H1 (cell line): ENCODE measurements at regions of chr3 and their contacts with region 1.

Region 1: GRCh38 chr3:122415720-122416654 is at the start of gene WDR5B:
- DNase-seq: peak; percentile 97 to 99
- H3K4me3 ChIP-seq: peak within 1 kb of the TSS; percentile 83 to 100 (median 88)
- H3K27ac ChIP-seq: peak within 1 kb of the TSS; percentile 92
- H3K4me1 ChIP-seq: peaks cover 0 to 7% (median 3%) of the 10 kb centered on the region in 4 experiments; a peak in 1 of 7 replicates
- H3K27me3 ChIP-seq: no peaks in the 10 kb centered on the region
- CTCF ChIP-seq: no peak
- EP300 ChIP-seq: no peak
- POLR2A ChIP-seq: peak; percentile 86 to 97
- RAD21 ChIP-seq: peak in 1 of 2 experiments; percentile 13; a peak in 1 of 4 replicates
- total RNA-seq, gene WDR5B: 2.7 and 3.5 TPM in 2 replicates

Region 2: DNA sequence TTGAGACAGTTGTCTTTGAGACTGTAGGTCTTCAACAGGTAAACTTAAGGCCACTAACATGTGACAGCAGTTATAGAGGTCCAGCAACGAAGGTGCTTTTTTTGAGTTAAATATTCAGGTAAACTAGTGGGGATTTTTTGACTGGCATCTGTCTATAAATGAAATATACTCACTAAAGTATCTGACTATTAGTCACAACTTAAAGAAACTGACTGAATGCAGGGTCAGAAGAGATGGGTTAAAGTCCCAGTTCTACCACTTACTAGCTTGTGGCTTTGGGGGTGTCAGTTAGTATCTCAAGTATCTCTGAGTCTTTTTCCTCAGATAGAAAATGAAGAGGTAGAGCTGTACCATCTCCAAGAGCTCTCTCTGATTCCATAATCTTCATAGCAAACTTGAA is 50.9 kb before region 1 on chr3:
- CTCF ChIA-PET with region 1: no interaction called
- POLR2A ChIA-PET with region 1: no interaction called
- DNase-seq: no peak
- H3K4me3 ChIP-seq: no peak overlapping the region
- H3K27ac ChIP-seq: no peak overlapping the region
- H3K4me1 ChIP-seq: no peaks in the 10 kb centered on the region
- H3K27me3 ChIP-seq: no peaks in the 10 kb centered on the region
- CTCF ChIP-seq: no peak
- EP300 ChIP-seq: no peak
- POLR2A ChIP-seq: no peak
- RAD21 ChIP-seq: no peak

Region 3: DNA sequence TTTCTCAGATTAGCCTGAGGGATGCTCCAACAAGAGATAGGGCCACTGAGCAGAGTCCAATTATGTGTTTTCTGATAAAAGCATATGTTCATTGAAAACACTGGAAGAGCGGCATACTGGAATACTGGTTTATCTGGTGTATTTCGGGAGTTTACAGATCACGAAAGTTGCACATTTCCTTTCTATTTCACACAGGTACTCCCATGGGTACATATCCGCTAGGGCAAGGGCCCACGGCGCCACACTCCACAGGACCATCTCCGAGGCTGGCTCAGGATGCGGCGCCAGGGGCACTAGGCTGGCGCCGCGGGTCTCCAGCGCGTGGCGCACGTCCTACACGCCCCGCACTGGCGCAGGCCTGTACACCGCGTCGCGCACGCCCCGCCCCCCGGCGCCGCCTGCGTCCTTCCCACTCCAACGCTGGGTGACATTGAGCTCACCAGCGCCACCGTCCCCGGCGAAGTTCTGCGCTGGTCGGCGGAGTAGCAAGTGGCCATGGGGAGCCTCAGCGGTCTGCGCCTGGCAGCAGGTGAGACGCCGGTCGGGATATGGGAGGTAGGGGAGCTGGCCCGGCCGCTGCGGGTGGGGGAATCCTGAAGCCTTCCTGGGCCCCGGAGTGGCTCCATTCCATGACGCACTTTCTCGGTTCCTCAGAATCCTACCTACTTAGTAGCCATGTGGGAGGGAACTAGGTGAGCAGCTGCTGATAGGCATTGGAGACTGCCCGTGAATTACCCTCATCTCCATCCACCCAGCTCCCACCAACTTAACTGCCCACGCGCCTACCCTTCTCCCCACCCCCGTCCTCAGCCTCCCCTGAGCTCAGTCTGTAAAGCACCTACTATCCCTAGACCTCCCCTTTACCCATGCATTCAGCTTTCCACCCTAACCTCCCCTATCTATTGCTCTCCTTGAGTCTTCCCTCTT is 32.0 kb before region 1 on chr3 and contains the start of gene FAM162A:
- CTCF ChIA-PET with region 1: interaction called, 17 read pairs
- POLR2A ChIA-PET with region 1: interaction called, 29 read pairs
- DNase-seq: peak; percentile 84 to 92
- H3K4me3 ChIP-seq: peak within 1 kb of the TSS; percentile 78 to 96 (median 94)
- H3K27ac ChIP-seq: peak within 1 kb of the TSS; percentile 80
- H3K4me1 ChIP-seq: peaks cover 0 to 6% (median 3%) of the 10 kb centered on the region in 4 experiments; a peak in 4 of 7 replicates
- H3K27me3 ChIP-seq: no peaks in the 10 kb centered on the region
- CTCF ChIP-seq: peak; percentile 52 to 70 (median 53)
- EP300 ChIP-seq: no peak
- POLR2A ChIP-seq: peak in 1 of 2 experiments; percentile 79; a peak in 1 of 3 replicates
- RAD21 ChIP-seq: peak; percentile 21 to 23; a peak in 2 of 4 replicates
- total RNA-seq, gene FAM162A: 54.1 and 59.7 TPM in 2 replicates

Region 4: DNA sequence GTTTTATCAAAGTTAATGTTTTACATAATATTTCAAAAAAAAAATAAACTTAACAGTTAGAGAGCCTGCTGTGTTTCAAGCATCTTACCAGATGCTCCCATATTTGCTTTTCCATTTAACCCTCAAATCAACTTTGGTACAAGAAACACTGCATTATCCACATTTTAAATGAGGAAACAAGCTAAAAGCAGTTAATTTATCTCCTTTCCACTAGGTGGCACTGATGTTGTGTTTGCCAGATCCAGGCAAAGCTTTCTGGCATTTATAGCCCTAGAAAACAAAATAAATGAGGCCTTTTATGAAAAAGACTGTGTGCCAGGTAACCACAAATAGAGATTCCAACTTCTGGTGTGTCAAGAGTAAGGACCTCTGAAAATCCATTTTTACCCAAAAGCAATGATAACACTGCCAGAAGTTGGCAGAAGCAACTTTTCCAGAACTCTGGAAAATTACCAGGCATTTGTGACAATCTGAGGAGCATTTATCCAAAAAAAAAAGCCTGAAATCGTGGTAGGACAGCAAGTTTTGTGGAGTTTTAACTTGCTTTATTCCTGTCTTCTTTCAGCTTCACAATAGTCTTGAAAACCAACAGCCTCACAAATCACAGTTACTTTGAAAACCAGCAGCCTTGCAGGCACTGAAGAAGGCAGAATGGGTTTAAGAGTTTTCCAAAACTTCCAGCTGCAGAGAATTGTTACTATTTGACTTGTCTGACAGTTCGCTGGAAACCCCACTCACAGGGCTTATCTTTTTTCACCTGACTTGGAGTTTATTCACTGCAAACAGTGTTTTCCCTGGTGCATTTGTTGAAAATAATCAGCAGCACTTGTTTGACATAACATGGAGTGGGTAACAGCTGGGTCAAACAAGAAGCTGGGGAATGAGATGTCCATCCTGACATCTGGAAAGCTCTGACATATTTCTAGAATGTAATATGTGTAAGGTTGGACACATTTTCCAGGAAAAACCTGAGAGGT is 22.8 kb before region 1 on chr3:
- CTCF ChIA-PET with region 1: interaction called, 16 read pairs
- POLR2A ChIA-PET with region 1: interaction called, 6 read pairs
- DNase-seq: no peak
- H3K4me3 ChIP-seq: no peak overlapping the region
- H3K27ac ChIP-seq: no peak overlapping the region
- H3K4me1 ChIP-seq: no peaks in the 10 kb centered on the region
- H3K27me3 ChIP-seq: no peaks in the 10 kb centered on the region
- CTCF ChIP-seq: peak in 2 of 3 experiments; percentile 54 to 64; a peak in 2 of 4 replicates
- EP300 ChIP-seq: no peak
- POLR2A ChIP-seq: no peak
- RAD21 ChIP-seq: peak; percentile 73 to 78

Region 5: GRCh38 chr3:122427857-122428471 is 12.0 kb after region 1 on chr3:
- CTCF ChIA-PET with region 1: no interaction called
- POLR2A ChIA-PET with region 1: interaction called, 10 read pairs
- DNase-seq: no peak
- H3K4me3 ChIP-seq: no peak overlapping the region
- H3K27ac ChIP-seq: no peak overlapping the region
- H3K4me1 ChIP-seq: no peaks in the 10 kb centered on the region
- H3K27me3 ChIP-seq: no peaks in the 10 kb centered on the region
- CTCF ChIP-seq: no peak
- EP300 ChIP-seq: no peak
- POLR2A ChIP-seq: no peak
- RAD21 ChIP-seq: no peak

Region 6: DNA sequence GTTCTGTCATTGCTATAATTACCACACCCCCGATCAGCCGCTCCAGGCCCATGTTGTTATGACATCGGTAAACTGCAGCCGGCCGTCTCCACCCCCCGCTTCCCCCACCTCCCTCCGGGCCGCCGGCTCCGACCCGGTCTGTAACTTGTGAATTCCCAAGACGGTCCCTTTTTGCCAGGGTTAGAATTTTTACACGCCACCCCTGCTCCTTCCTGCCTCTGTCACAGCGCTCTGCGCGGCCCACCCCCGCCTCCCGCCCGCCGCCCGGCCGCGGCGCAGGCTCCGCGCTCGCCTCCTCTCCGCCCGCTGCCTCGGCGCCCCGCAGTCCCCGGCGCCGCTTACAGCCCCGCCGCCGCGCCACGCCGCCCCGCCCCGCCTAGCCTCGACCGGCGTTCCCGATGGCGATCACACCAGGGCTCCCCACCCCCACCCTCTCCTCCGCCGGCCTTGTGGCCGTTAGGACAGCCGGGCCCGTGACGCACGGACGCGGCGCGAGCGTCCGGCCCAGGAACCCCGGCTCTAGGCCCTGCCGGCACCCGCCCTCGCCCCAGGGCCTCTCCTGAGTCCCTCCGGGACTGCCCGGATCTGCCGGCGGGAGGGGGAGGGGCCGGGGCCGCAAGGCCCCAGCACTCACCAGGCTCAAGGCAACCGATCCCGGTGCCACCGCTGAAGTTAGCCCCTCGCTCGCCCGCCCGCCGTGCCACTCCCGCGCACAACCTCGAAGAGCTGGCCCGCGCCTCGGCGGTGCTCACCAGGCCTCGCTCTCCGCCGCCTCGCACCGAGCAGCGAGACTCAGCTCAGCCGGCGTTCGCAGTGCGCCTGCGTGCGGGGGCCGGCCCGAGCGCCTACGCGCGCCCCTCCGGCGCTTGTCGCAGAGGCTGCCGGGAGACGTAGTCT is 98.4 kb after region 1 on chr3 and contains the start of gene KPNA1:
- CTCF ChIA-PET with region 1: no interaction called
- POLR2A ChIA-PET with region 1: interaction called, 10 read pairs
- DNase-seq: peak in 1 of 2 experiments; percentile 87
- H3K4me3 ChIP-seq: peak within 1 kb of the TSS; percentile 85 to 93 (median 90)
- H3K27ac ChIP-seq: peak within 1 kb of the TSS; percentile 66
- H3K4me1 ChIP-seq: peaks cover 0 to 10% (median 2%) of the 10 kb centered on the region in 4 experiments; a peak in 5 of 7 replicates
- H3K27me3 ChIP-seq: no peaks in the 10 kb centered on the region
- CTCF ChIP-seq: no peak
- EP300 ChIP-seq: peak in 1 of 2 experiments; percentile 2; a peak in 1 of 3 replicates
- POLR2A ChIP-seq: peak; percentile 70 to 88
- RAD21 ChIP-seq: no peak
- total RNA-seq, gene KPNA1: 59.0 and 63.0 TPM in 2 replicates